IMR-90 (cell line): ENCODE measurements at regions of chr10 and their contacts with region 1.

Region 1: DNA sequence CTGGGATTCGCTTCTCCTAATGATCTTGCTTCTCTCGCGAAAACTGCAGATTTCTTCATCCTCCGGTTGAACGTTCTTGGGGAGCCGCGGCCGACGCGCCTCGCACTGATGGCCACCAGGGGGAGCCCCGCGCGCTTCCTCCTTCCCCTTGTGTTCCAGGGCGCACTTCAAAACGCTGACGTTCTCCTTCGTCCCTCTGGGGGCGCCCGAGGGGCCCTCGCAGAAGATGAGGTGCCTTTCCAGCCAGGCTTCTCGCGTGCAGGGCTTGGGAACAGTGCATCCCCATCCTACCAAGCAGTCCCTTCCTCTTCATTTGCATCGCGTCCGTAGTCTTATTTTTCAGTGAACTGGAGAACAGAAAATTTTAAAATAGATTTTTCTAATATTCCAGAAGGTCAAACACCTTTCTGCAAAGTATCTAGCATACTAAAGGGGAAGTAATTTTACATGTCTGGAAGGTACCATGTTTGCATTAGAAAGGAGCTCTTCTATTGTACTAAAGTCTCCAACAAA is 22.5 kb downstream of the GSTO2 start:
- DNase-seq: peak; percentile 84
- ATAC-seq: peak; percentile 99
- H3K4me3 ChIP-seq: no peak overlapping the region
- H3K27ac ChIP-seq: no peak overlapping the region
- H3K4me1 ChIP-seq: no peaks in the 10 kb centered on the region; the same call in 1 of the 2 replicates
- H3K27me3 ChIP-seq: no peaks in the 10 kb centered on the region
- CTCF ChIP-seq: peak; percentile 100
- POLR2A ChIP-seq: 0 out of 2 replicates have a peak, but pooled peaks have one; percentile 19
- RAD21 ChIP-seq: peak; percentile 96

Region 2: GRCh38 chr10:104121520-104122224 is 169.8 kb before region 1 on chr10 and contains the start of gene SFR1:
- CTCF ChIA-PET with region 1: no interaction called
- POLR2A ChIA-PET with region 1: interaction called, 15 read pairs
- dilution Hi-C with region 1: no loop called
- in situ Hi-C with region 1: no loop called
- intact Hi-C with region 1: no loop called
- DNase-seq: peak; percentile 97
- ATAC-seq: peak; percentile 98
- H3K4me3 ChIP-seq: peak within 1 kb of the TSS; percentile 85
- H3K27ac ChIP-seq: peak within 1 kb of the TSS; percentile 93
- H3K4me1 ChIP-seq: no peaks in the 10 kb centered on the region; the same call in 1 of the 2 replicates
- H3K27me3 ChIP-seq: no peaks in the 10 kb centered on the region
- CTCF ChIP-seq: peak; percentile 82
- POLR2A ChIP-seq: peak; percentile 93
- RAD21 ChIP-seq: peak; percentile 56
- total RNA-seq, gene SFR1: 1.6 and 5.6 TPM in 2 replicates

Region 3: GRCh38 chr10:104259999-104260774 is 31.3 kb before region 1 on chr10:
- CTCF ChIA-PET with region 1: interaction called, 3 read pairs
- POLR2A ChIA-PET with region 1: no interaction called
- dilution Hi-C with region 1: no loop called
- in situ Hi-C with region 1: no loop called
- intact Hi-C with region 1: loop called (anchors 1 kb)
- DNase-seq: peak; percentile 35
- ATAC-seq: peak; percentile 21; the same call in 1 of the 2 replicates
- H3K4me3 ChIP-seq: no peak overlapping the region
- H3K27ac ChIP-seq: peak overlapping the region; percentile 62
- H3K4me1 ChIP-seq: peaks cover 9% of the 10 kb centered on the region
- H3K27me3 ChIP-seq: no peaks in the 10 kb centered on the region
- CTCF ChIP-seq: no peak
- POLR2A ChIP-seq: no peak
- RAD21 ChIP-seq: no peak

Region 4: GRCh38 chr10:104274762-104275721 is 16.5 kb before region 1 on chr10:
- CTCF ChIA-PET with region 1: interaction called, 15 read pairs
- POLR2A ChIA-PET with region 1: interaction called, 3 read pairs
- dilution Hi-C with region 1: no loop called
- in situ Hi-C with region 1: no loop called
- intact Hi-C with region 1: no loop called
- DNase-seq: no peak
- ATAC-seq: peak; percentile 84
- H3K4me3 ChIP-seq: peak overlapping the region; percentile 29
- H3K27ac ChIP-seq: no peak overlapping the region
- H3K4me1 ChIP-seq: peaks cover 13% of the 10 kb centered on the region
- H3K27me3 ChIP-seq: no peaks in the 10 kb centered on the region
- CTCF ChIP-seq: peak; percentile 64
- POLR2A ChIP-seq: no peak
- RAD21 ChIP-seq: peak; percentile 49

Region 5: DNA sequence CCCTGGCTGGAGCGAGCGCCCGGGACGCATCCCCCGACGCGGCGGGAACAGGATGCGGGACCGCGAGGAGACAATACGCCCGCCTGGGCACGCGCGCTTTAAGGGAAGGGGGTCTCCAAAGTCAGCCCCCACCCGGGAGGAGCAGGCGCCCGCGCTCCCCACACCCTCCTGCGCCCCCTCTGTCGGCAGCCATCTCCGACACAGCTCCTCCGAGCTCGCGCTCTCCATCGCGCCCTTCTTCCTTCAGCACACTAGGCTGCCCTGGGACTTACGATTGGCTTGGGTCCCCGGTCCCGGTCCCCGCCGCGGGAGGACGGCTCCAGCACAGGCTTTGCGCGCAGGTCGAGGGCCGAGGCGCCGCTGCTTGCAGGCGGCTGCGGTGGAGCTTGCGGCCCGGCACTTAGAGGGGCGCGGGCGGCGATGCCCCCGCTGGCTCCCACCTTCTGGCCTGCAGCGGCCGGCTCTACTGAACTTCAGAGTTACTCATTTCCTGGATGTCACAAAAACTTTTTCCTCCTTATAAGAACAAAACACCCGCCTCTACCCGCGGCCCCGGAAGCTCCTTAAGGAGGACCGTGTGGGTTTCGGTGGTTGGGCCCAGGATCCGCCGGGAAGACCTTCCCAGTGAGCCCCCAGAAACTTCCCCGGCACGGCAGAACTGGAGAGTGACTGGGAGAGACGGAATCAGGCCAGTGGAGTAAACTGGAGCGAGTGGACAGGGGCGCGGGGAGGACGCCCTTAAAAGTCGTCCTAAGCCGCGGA is 46.7 kb after region 1 on chr10 and contains the start of gene ITPRIP:
- CTCF ChIA-PET with region 1: interaction called, 5 read pairs
- POLR2A ChIA-PET with region 1: no interaction called
- dilution Hi-C with region 1: no loop called
- in situ Hi-C with region 1: no loop called
- intact Hi-C with region 1: loop called (anchors 1 kb)
- DNase-seq: peak; percentile 87
- ATAC-seq: peak; percentile 79
- H3K4me3 ChIP-seq: peak within 1 kb of the TSS; percentile 83
- H3K27ac ChIP-seq: peak within 1 kb of the TSS; percentile 98
- H3K4me1 ChIP-seq: peaks cover 31% of the 10 kb centered on the region
- H3K27me3 ChIP-seq: no peaks in the 10 kb centered on the region
- CTCF ChIP-seq: no peak; the same call in 1 of the 2 replicates
- POLR2A ChIP-seq: peak; percentile 97
- RAD21 ChIP-seq: no peak
- total RNA-seq, gene ITPRIP: 7.2 and 7.5 TPM in 2 replicates

Region 6: DNA sequence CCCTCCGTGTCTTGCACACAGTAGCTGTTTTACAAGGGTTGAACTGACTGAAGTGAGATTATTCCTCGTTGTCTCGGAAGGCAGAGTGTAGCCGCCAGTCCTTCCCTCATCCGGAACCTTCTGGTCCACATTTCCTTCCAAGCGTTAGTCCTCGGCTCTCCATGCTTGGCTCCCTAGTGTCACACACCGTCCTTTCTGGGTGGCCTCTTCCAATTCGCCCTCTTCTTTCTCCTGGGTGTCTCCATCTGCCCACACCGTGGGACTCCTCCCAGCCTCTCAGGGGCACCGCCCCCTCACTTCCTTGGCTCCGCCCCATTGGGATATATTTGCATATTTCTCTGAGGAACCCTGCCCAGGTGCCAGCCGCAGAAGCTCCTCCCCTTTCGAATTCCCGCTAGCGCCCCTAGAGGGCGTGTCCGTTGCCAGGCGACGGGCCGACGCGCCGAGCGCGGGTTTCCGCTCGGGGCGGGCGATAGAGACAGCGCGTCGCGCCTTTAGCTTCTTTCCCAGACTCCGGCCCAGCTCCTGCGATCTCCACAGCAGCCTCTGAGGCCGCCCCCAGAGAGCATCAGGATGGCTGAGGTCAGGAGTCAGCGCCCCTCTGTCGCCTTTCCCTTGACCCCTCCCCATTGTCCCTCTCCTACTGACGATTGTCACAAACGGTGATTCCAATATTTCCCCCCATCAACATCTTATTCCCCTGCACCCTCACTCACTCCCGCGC is 62.0 kb after region 1 on chr10 and contains the start of gene CFAP58:
- CTCF ChIA-PET with region 1: interaction called, 17 read pairs
- POLR2A ChIA-PET with region 1: no interaction called
- dilution Hi-C with region 1: no loop called
- in situ Hi-C with region 1: loop called (anchors 5 kb)
- intact Hi-C with region 1: loop called (anchors 1 kb)
- DNase-seq: peak; percentile 70
- ATAC-seq: peak; percentile 87
- H3K4me3 ChIP-seq: peak within 1 kb of the TSS; percentile 53
- H3K27ac ChIP-seq: no peak within 1 kb of the TSS; the same call in 1 of the 2 replicates
- H3K4me1 ChIP-seq: peaks cover 7% of the 10 kb centered on the region; the same call in 1 of the 2 replicates
- H3K27me3 ChIP-seq: peaks cover 3% of the 10 kb centered on the region; the same call in 1 of the 2 replicates
- CTCF ChIP-seq: peak; percentile 67
- POLR2A ChIP-seq: no peak
- RAD21 ChIP-seq: no peak
- total RNA-seq, gene CFAP58: 0.36 and 0.83 TPM in 2 replicates

Region 7: DNA sequence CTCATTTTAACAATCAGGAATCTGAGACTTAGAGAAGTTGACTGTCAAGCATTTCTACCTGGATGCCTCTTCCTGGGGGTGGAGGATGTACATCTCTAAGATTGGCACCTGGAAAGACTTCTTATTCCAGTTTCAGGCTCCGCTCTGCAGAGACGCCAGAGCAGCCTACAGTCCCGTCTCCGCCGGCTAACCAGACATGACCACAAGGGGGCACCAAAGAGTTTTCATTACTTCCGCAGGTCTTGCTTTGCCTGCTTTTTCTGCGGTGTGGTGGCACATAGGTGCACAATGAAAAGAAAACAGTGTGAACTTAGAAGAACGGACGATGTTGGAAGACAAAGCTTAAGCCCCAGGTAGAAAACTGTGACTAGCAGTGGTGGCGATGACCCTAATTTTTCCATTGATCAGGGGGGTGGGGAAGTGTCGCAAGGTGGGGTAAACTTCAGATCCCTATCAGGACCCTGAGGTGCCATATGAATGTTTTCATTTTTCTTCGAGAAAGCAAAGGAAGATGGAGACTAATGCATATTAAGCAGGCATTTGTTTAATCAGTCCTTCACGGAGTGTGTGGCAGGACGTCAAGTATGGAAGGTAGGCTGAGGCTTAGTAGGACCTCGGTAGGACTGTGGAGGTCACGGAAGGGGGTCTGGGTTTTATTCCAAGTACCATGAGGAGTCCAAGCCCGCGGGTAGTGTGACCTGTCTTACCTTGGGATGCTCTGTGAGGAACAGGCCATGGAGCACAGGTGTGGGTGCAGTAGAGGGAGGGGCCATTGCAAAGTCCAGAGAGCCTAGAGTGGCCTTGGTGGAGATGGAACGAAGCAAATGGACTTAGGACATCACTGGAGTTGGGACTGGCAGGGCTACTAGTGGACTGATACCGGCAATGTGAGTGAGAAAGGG is 289.5 kb after region 1 on chr10:
- CTCF ChIA-PET with region 1: no interaction called
- POLR2A ChIA-PET with region 1: no interaction called
- dilution Hi-C with region 1: no loop called
- in situ Hi-C with region 1: no loop called
- intact Hi-C with region 1: loop called (anchors 5 kb)
- DNase-seq: peak; percentile 51
- ATAC-seq: peak; percentile 90
- H3K4me3 ChIP-seq: no peak overlapping the region
- H3K27ac ChIP-seq: no peak overlapping the region
- H3K4me1 ChIP-seq: no peaks in the 10 kb centered on the region; the same call in 1 of the 2 replicates
- H3K27me3 ChIP-seq: no peaks in the 10 kb centered on the region; the same call in none of the 2 replicates
- CTCF ChIP-seq: peak; percentile 70
- POLR2A ChIP-seq: no peak
- RAD21 ChIP-seq: peak; percentile 62

Region 8: GRCh38 chr10:105041956-105042355 is 750.5 kb after region 1 on chr10:
- CTCF ChIA-PET with region 1: no interaction called
- POLR2A ChIA-PET with region 1: no interaction called
- dilution Hi-C with region 1: no loop called
- in situ Hi-C with region 1: no loop called
- intact Hi-C with region 1: no loop called
- DNase-seq: no peak
- ATAC-seq: no peak
- H3K4me3 ChIP-seq: no peak overlapping the region
- H3K27ac ChIP-seq: no peak overlapping the region
- H3K4me1 ChIP-seq: no peaks in the 10 kb centered on the region
- H3K27me3 ChIP-seq: no peaks in the 10 kb centered on the region
- CTCF ChIP-seq: no peak
- POLR2A ChIP-seq: no peak
- RAD21 ChIP-seq: no peak